ENCODE measurements at regions of chr1 and their contacts with region 1.

Region 1: DNA sequence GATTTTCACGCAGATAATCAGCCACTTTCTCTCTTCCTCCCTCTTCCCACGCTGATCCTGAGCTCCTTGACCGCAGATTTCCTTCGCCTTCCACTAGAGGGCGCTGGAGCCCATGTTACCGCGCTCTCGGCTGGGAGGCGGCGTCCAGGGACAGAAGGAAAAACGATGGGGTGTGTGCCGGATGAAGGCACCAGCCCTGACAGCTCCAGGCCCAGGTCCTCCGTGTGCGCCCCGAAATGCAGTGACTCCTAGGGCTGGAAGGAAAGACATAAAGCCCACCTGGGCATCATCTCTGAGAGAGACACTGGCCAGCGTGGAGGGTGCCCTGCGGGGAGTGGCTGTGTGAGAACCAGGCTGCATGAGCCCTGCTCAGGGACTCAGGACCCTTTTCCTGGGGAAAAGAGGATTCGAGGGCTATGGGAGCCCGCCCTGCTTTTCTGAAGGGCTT is 44.9 kb upstream of the CYP2J2 start:
- DNase-seq: peak; percentile 49
- ATAC-seq: no peak
- H3K4me3 ChIP-seq: no peak overlapping the region
- H3K4me3 Mint-ChIP-seq: no peak overlapping the region
- H3K27ac ChIP-seq: no peak overlapping the region
- H3K27ac Mint-ChIP-seq: no peak overlapping the region
- H3K4me1 ChIP-seq: peaks cover 3 to 5% of the 10 kb centered on the region in 2 donors
- H3K4me1 Mint-ChIP-seq: peaks cover 5% of the 10 kb centered on the region
- H3K27me3 ChIP-seq: peaks cover 0 to 8% (median 3%) of the 10 kb centered on the region in 4 experiments
- H3K27me3 Mint-ChIP-seq: peaks cover 34% of the 10 kb centered on the region
- CTCF ChIP-seq: peak; percentile 80

Region 2: GRCh38 chr1:61641578-61642336 is 1670.3 kb after region 1 on chr1:
- CTCF ChIA-PET with region 1: interaction called, 3 read pairs
- POLR2A ChIA-PET with region 1: no interaction called
- intact Hi-C with region 1: loop called (anchors 10 kb)
- DNase-seq: peak; percentile 42
- ATAC-seq: peak; percentile 92
- H3K4me3 ChIP-seq: peak overlapping the region in 4 of 5 experiments; percentile 12 to 70 (median 54)
- H3K4me3 Mint-ChIP-seq: peak overlapping the region; percentile 86
- H3K27ac ChIP-seq: no peak overlapping the region
- H3K27ac Mint-ChIP-seq: peak overlapping the region; percentile 27
- H3K4me1 ChIP-seq: no peaks in the 10 kb centered on the region
- H3K4me1 Mint-ChIP-seq: peaks cover 16% of the 10 kb centered on the region
- H3K27me3 ChIP-seq: no peaks in the 10 kb centered on the region
- H3K27me3 Mint-ChIP-seq: peaks cover 4% of the 10 kb centered on the region
- CTCF ChIP-seq: peak; percentile 83

Region 3: GRCh38 chr1:61851849-61852669 is 1880.6 kb after region 1 on chr1:
- CTCF ChIA-PET with region 1: interaction called, 34 read pairs
- POLR2A ChIA-PET with region 1: no interaction called
- intact Hi-C with region 1: no loop called
- DNase-seq: peak; percentile 59
- ATAC-seq: no peak
- H3K4me3 ChIP-seq: no peak overlapping the region
- H3K4me3 Mint-ChIP-seq: no peak overlapping the region
- H3K27ac ChIP-seq: no peak overlapping the region
- H3K27ac Mint-ChIP-seq: no peak overlapping the region
- H3K4me1 ChIP-seq: no peaks in the 10 kb centered on the region
- H3K4me1 Mint-ChIP-seq: no peaks in the 10 kb centered on the region
- H3K27me3 ChIP-seq: no peaks in the 10 kb centered on the region
- H3K27me3 Mint-ChIP-seq: no peaks in the 10 kb centered on the region
- CTCF ChIP-seq: peak; percentile 86

Region 4: GRCh38 chr1:61865646-61866231 is 1894.3 kb after region 1 on chr1:
- CTCF ChIA-PET with region 1: interaction called, 3 read pairs
- POLR2A ChIA-PET with region 1: no interaction called
- intact Hi-C with region 1: loop called (anchors 5 kb)
- DNase-seq: no peak
- ATAC-seq: no peak
- H3K4me3 ChIP-seq: no peak overlapping the region
- H3K4me3 Mint-ChIP-seq: no peak overlapping the region
- H3K27ac ChIP-seq: no peak overlapping the region
- H3K27ac Mint-ChIP-seq: no peak overlapping the region
- H3K4me1 ChIP-seq: no peaks in the 10 kb centered on the region
- H3K4me1 Mint-ChIP-seq: peaks cover 5% of the 10 kb centered on the region
- H3K27me3 ChIP-seq: no peaks in the 10 kb centered on the region
- H3K27me3 Mint-ChIP-seq: no peaks in the 10 kb centered on the region
- CTCF ChIP-seq: no peak